CD4-positive, alpha-beta T cell (primary cell): ENCODE measurements at regions of chr22 and their contacts with region 1.

Region 1: GRCh38 chr22:40116496-40117200 is 61.1 kb upstream of the TNRC6B start:
- DNase-seq: peak; percentile 17 to 87 (median 54)
- ATAC-seq: peak; percentile 94
- H3K4me3 ChIP-seq: no peak overlapping the region
- H3K4me3 Mint-ChIP-seq: peak overlapping the region; percentile 74
- H3K27ac ChIP-seq: peak overlapping the region; percentile 39 to 56
- H3K27ac Mint-ChIP-seq: peak overlapping the region; percentile 87
- H3K4me1 ChIP-seq: peaks cover 67% of the 10 kb centered on the region
- H3K4me1 Mint-ChIP-seq: peaks cover 95% of the 10 kb centered on the region
- H3K27me3 ChIP-seq: no peaks in the 10 kb centered on the region
- H3K27me3 Mint-ChIP-seq: no peaks in the 10 kb centered on the region
- CTCF ChIP-seq: no peak

Region 2: DNA sequence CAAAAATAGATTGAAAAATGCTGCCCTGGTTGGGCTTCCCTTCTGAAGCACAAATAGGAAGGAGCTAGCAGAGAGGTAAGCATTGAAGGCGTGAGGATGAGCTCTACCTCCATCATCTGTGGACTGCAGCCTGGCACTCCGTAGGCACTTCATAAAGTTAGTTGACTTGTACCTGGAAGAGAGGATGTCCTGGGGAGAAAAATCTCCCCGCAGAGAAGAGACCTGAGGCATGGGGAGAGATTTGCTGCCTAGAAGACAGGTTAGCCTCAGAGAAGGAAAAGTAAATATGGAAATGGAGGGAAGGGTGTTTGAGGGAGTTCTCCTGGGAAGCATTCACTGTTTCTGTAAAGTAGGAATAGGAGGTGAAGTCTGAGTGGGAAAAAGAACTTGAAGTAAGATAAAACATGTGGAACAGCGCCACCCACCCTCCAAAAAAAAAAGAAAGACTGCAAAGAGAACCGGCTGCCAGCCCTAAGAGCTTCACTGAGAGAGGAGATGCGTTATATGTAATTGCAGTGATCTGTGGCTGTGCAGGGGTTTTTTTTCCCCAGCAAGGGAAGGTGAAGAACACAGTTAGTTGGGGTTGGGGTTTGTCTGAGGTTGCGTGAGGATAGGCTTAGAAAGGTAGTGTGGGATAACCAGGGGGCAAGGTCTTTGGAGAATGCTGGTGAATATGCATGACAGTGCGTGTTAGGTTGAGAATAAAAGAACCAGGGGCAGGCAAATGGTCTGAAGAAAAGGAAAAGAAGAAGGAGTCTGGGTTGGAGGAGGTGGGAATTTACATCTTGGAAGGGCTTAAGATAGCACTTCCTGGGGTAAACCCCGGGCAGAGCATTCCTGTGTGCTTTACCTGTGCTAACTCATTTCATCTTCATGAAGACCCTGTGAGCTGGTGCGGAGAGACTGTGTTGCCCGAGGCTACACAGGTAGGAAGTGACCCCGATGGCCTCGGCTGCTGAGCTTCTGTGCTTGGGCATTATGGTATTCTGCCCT is 77.1 kb after region 1 on chr22:
- CTCF ChIA-PET with region 1: no interaction called
- POLR2A ChIA-PET with region 1: interaction called, 6 read pairs
- intact Hi-C with region 1: loop called in 1 of 2 experiments (anchors 5 kb)
- DNase-seq: peak in 3 of 14 experiments; percentile 31 to 45 (median 40)
- ATAC-seq: peak; percentile 61
- H3K4me3 ChIP-seq: no peak overlapping the region
- H3K4me3 Mint-ChIP-seq: peak overlapping the region; percentile 7
- H3K27ac ChIP-seq: no peak overlapping the region
- H3K27ac Mint-ChIP-seq: peak overlapping the region; percentile 75
- H3K4me1 ChIP-seq: peaks cover 70% of the 10 kb centered on the region
- H3K4me1 Mint-ChIP-seq: peaks cover 83% of the 10 kb centered on the region
- H3K27me3 ChIP-seq: no peaks in the 10 kb centered on the region
- H3K27me3 Mint-ChIP-seq: no peaks in the 10 kb centered on the region
- CTCF ChIP-seq: no peak

Region 3: GRCh38 chr22:40243891-40244290 is 127.2 kb after region 1 on chr22:
- CTCF ChIA-PET with region 1: no interaction called
- POLR2A ChIA-PET with region 1: interaction called, 3 read pairs
- intact Hi-C with region 1: loop called in 1 of 2 experiments (anchors 5 kb)
- DNase-seq: peak in 4 of 14 experiments; percentile 20 to 71 (median 57)
- ATAC-seq: no peak
- H3K4me3 ChIP-seq: peak overlapping the region; percentile 9
- H3K4me3 Mint-ChIP-seq: peak overlapping the region; percentile 80
- H3K27ac ChIP-seq: peak overlapping the region in 1 of 2 donors; percentile 18
- H3K27ac Mint-ChIP-seq: peak overlapping the region; percentile 86
- H3K4me1 ChIP-seq: peaks cover 82% of the 10 kb centered on the region
- H3K4me1 Mint-ChIP-seq: peaks cover 93% of the 10 kb centered on the region
- H3K27me3 ChIP-seq: no peaks in the 10 kb centered on the region
- H3K27me3 Mint-ChIP-seq: no peaks in the 10 kb centered on the region
- CTCF ChIP-seq: no peak

Region 4: DNA sequence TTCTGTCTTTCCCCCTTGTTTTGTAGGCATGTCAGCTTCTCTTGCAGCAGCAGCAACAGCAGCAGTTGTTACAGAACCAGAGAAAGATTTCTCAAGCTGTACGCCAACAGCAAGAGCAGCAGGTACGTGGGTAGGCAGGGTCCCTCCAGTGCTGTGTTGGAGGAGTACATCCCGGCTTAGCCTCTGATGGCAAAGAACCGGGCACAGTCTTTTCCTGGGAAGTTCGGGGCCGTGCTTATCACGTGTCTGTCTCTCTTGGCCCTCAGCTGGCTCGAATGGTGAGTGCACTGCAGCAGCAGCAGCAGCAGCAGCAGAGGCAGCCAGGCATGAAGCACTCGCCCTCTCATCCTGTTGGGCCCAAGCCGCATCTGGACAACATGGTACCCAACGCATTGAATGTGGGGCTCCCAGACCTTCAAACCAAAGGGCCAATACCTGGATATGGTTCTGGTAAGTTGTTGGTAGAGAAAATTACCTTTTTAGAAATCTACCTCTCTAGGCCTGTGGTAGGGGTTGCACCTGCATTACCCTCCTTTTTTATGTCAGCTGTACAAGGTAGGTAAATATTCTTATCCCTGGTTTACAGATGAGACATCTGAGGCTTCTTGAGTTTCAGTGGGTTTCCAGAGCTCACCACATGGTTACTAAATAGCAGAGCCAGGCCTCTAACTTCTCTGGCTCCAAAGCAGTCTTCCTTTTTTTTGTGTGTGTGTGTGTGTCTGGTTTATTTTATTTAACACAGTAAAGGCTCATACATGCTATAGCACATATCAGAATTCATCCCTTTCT is 184.4 kb after region 1 on chr22:
- CTCF ChIA-PET with region 1: no interaction called
- POLR2A ChIA-PET with region 1: no interaction called
- intact Hi-C with region 1: no loop called
- DNase-seq: no peak
- ATAC-seq: no peak
- H3K4me3 ChIP-seq: no peak overlapping the region
- H3K4me3 Mint-ChIP-seq: no peak overlapping the region
- H3K27ac ChIP-seq: no peak overlapping the region
- H3K27ac Mint-ChIP-seq: no peak overlapping the region
- H3K4me1 ChIP-seq: no peaks in the 10 kb centered on the region
- H3K4me1 Mint-ChIP-seq: peaks cover 16% of the 10 kb centered on the region
- H3K27me3 ChIP-seq: no peaks in the 10 kb centered on the region
- H3K27me3 Mint-ChIP-seq: no peaks in the 10 kb centered on the region
- CTCF ChIP-seq: no peak